Kidney (tissue), 22 donors: ENCODE measurements at regions of chr17 and their contacts with region 1.

Region 1: DNA sequence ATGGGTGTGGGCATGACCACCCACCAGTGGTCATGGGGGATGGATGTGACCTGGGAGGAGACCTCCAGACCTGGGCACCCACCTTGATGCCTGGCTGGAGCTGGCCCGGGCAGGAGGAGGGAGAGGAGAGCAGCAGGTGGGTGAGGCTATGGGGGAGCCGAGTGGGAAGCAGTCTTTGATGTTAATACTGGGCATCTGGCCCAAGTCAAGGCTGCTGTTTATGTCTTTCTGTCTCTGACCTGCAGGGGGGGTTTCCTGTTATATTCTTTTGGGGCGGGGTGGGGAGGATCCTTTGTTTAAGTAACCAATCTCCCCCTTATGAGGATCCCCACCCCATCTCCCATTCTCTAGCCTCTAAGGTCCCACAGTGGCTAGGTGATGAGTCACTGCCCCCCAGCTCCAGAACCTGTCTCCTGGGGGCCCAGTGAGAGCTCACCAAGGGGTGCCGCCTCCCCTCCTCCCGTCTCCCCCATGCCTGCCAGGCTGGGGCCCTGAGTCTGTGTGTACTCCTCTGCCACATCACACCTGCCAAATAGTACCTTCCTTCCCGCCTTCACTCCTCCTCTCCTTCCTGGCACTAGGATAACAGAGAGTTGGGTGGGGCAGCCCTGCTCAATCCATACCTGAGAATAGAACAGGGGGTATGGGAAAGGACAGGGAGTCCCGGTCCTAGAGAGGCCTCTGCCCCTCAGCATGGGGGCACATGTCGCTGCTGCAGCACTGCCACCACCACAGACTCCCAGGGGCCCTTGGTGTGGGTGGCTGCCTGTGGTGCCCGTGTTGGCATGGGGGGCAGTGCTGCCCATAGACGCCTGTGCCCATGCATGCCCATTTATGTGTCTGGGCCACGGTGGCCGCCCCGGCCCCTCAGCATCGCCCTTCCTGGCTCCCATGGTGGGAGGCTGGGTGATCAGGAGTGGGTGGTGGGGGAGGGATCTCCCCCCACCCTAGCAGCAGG is 7.3 kb downstream of the THRA start:
- DNase-seq: peak in 3 of 5 donors; percentile 62 to 82 (median 66)
- H3K4me3 ChIP-seq: peak overlapping the region in 1 of 3 donors; percentile 47
- H3K27ac ChIP-seq: peak overlapping the region; percentile 93 to 97
- H3K4me1 ChIP-seq: peaks cover 4 to 81% (median 77%) of the 10 kb centered on the region in 3 donors
- H3K27me3 ChIP-seq: no peaks in the 10 kb centered on the region
- CTCF ChIP-seq: peak; percentile 16

Region 2: DNA sequence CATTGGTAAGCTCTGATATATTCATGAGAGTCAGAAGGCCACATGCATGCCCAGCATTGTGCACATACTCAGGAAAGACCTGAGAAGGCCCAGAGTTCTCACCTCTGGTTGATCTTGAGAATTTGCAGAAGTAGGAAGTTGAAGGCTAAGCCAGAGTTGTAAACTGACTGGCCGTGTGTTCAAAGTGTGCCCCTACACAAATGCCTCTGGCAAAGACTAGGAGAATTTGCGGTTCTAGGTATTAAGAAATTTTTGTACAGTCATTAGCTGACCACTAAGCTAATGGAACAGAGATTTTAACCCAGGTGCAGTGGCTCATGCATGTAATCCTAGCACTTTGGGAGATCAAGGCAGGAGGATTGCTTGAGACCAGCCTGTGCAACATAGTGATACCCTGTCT is 693.6 kb before region 1 on chr17:
- intact Hi-C with region 1: no loop called
- DNase-seq: no peak
- H3K4me3 ChIP-seq: no peak overlapping the region
- H3K27ac ChIP-seq: no peak overlapping the region
- H3K4me1 ChIP-seq: peaks cover 0 to 4% (median 0%) of the 10 kb centered on the region in 3 donors
- H3K27me3 ChIP-seq: no peaks in the 10 kb centered on the region
- CTCF ChIP-seq: no peak

Region 3: DNA sequence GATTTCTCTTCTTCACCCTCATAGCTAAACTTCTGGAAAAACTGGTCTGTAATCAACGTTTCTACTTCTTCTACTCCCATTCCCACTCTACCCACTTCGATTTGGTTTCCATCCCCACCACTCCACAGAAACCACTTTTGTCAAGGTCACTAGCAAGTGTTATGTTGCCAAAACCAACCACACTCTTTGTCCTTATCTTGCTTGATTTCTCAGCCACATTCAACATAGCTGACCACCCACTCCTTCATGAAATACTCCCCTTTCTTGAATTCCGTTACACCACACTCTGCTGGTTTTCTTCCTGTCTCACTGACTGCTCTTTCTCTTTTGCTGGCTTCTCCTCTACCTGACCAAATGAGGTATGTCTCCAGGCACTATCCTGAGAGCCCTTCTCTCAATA is 217.8 kb before region 1 on chr17:
- intact Hi-C with region 1: no loop called
- DNase-seq: no peak
- H3K4me3 ChIP-seq: no peak overlapping the region
- H3K27ac ChIP-seq: no peak overlapping the region
- H3K4me1 ChIP-seq: peaks cover 0 to 2% (median 0%) of the 10 kb centered on the region in 3 donors
- H3K27me3 ChIP-seq: no peaks in the 10 kb centered on the region
- CTCF ChIP-seq: no peak

Region 4: DNA sequence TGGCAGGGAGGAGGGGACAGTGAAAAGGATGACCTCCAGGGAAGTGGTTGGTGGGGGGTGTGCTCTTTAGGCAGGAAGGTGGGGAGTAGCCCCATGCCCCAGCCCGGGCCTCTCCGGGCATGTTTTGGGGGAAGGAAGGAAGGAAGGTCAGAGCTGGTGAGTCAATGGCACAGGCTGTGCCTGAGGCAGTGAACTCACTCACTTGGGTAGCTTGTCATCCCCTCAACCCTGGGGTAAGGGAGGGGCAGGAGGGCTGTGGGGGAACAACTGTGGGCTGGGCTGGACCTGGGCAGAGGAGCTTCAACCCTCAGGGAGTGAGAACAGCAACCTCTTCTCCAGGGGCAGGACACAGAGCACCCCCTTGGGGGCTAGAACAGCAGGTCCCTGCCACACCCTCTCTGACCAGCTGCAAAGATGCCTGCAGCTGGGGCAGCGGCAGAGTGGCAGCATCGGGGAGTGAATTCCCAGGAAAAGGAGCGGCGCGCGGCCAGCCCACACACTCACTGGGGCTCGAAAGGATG is 48.5 kb before region 1 on chr17:
- intact Hi-C with region 1: no loop called
- DNase-seq: no peak
- H3K4me3 ChIP-seq: no peak overlapping the region
- H3K27ac ChIP-seq: no peak overlapping the region
- H3K4me1 ChIP-seq: peaks cover 0 to 7% (median 0%) of the 10 kb centered on the region in 3 donors
- H3K27me3 ChIP-seq: no peaks in the 10 kb centered on the region
- CTCF ChIP-seq: no peak

Region 5: GRCh38 chr17:40113110-40113906 is 43.3 kb after region 1 on chr17:
- intact Hi-C with region 1: loop called (anchors 5 kb)
- DNase-seq: peak; percentile 94 to 98 (median 96)
- H3K4me3 ChIP-seq: peak overlapping the region; percentile 45 to 74 (median 49)
- H3K27ac ChIP-seq: peak overlapping the region; percentile 36 to 95
- H3K4me1 ChIP-seq: peaks cover 12 to 47% (median 38%) of the 10 kb centered on the region in 3 donors
- H3K27me3 ChIP-seq: no peaks in the 10 kb centered on the region
- CTCF ChIP-seq: peak; percentile 98

Region 6: GRCh38 chr17:40371261-40371929 is 301.4 kb after region 1 on chr17:
- intact Hi-C with region 1: no loop called
- DNase-seq: no peak
- H3K4me3 ChIP-seq: no peak overlapping the region
- H3K27ac ChIP-seq: no peak overlapping the region
- H3K4me1 ChIP-seq: no peaks in the 10 kb centered on the region
- H3K27me3 ChIP-seq: no peaks in the 10 kb centered on the region
- CTCF ChIP-seq: no peak